ENCODE measurements at regions of chr1 and their contacts with region 1.

Region 1: DNA sequence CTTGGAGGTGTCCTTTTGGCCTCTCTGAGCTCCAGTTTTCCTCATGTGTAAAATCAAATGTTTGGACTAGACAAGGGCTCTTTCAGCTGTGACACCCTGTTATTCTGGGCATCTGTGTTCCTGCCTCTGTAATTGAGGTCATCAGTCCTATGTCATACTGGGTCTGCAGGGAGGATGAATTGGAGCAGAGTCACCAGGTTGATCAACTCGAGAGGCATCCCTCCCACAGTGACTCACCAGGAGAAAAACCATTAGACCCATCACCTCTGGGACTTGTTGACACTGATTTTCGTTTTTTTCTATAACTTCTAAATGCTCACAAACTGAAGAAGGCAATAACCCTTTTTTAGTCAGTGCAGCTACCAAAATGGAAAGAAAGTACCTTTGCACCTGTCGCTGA is 82.2 kb downstream of the ST6GALNAC5 start:
- DNase-seq: no peak
- H3K4me3 ChIP-seq: no peak overlapping the region
- H3K27ac ChIP-seq: no peak overlapping the region
- H3K4me1 ChIP-seq: peaks cover 4% of the 10 kb centered on the region; the same call in 1 of the 2 replicates
- H3K27me3 ChIP-seq: no peaks in the 10 kb centered on the region
- CTCF ChIP-seq: no peak

Region 2: DNA sequence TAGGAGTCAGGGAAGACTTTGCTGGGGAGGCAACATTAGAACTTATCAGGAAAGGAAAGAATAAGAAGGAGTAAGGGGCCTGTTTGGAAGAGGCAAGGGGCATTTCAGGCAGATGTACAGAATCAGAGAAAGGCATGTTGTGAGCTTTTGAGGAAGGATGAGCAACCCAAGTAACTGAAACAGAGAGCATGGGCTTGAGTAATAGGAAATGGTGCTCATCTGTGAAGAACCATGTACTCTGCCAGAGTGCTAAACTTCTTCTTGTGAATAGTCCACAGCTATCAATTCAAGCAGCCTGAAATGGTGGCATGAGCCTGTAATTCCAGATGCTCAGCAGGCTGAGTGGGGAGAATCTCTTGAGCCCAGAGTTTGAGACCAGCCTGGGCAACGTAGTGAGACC is 289.0 kb after region 1 on chr1:
- CTCF ChIA-PET with region 1: no interaction called
- POLR2A ChIA-PET with region 1: interaction called, 10 read pairs
- intact Hi-C with region 1: no loop called
- DNase-seq: no peak
- H3K4me3 ChIP-seq: no peak overlapping the region
- H3K27ac ChIP-seq: no peak overlapping the region
- H3K4me1 ChIP-seq: no peaks in the 10 kb centered on the region
- H3K27me3 ChIP-seq: no peaks in the 10 kb centered on the region
- CTCF ChIP-seq: no peak